CD8-positive, alpha-beta T cell (primary cell): ENCODE measurements at regions of chr2 and their contacts with region 1.

Region 1: GRCh38 chr2:62195421-62196277 is at the start of gene B3GNT2:
- DNase-seq: peak; percentile 79 to 92 (median 84)
- ATAC-seq: peak; percentile 75
- H3K4me3 ChIP-seq: peak within 1 kb of the TSS; percentile 93 to 99
- H3K4me3 Mint-ChIP-seq: peak within 1 kb of the TSS; percentile 91
- H3K27ac ChIP-seq: peak within 1 kb of the TSS; percentile 86 to 90
- H3K27ac Mint-ChIP-seq: peak within 1 kb of the TSS; percentile 91
- H3K4me1 ChIP-seq: peaks cover 40% of the 10 kb centered on the region
- H3K4me1 Mint-ChIP-seq: peaks cover 32% of the 10 kb centered on the region
- H3K27me3 ChIP-seq: no peaks in the 10 kb centered on the region
- H3K27me3 Mint-ChIP-seq: no peaks in the 10 kb centered on the region
- CTCF ChIP-seq: no peak
- total RNA-seq, gene B3GNT2: 74.1 to 77.9 TPM

Region 2: DNA sequence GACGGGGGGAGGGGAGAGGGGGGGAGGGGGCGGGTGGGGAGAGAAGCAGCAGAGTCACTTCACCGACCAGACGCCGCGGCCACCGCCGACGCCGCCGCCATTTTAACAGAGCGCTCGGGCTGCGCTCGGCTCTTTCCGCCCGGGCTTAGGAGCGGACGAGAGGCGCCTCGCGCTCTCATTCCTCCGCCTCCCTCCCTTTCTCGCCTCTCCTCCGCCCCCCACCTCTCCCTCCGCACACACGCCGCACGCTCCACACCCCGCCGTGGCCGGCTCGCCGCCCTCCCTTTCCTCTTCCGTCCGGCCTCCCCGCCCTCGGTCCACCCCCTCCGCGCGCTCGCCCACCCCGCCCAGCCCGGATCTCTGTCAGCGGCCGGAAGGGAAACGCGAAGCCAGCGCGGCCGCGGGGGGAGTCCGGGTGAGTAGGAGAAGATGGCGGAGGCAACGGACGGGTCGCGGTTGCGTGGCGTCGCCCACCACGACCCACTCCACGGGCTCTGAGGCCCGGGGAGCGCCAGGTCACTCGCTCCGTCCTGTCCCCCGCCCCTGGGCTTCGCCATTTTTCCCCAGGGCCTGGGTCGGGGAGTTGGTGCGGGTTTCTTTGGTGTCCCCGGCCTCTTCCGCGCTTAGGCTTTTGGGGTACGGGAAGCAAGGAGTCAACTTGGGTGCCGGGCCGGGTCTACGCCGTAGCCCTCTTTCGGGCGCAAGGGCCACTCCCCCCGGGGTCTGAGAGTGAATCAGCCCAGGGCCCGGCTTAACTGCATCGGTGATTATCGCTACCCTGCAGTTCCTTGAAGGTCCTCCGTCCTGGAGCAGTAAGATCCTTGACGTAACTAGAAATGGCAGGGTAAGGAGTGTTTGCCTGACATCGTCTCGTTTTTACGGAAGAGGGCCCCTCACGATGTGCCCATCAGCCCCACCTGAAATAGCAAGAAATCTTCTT is 724.4 kb before region 1 on chr2 and contains the start of gene USP34:
- CTCF ChIA-PET with region 1: no interaction called
- POLR2A ChIA-PET with region 1: no interaction called
- intact Hi-C with region 1: loop called (anchors 5 kb)
- DNase-seq: peak; percentile 90 to 98 (median 93)
- ATAC-seq: peak; percentile 85
- H3K4me3 ChIP-seq: peak within 1 kb of the TSS; percentile 77 to 99
- H3K4me3 Mint-ChIP-seq: peak within 1 kb of the TSS; percentile 92
- H3K27ac ChIP-seq: peak within 1 kb of the TSS; percentile 89 to 100
- H3K27ac Mint-ChIP-seq: peak within 1 kb of the TSS; percentile 98
- H3K4me1 ChIP-seq: peaks cover 35% of the 10 kb centered on the region
- H3K4me1 Mint-ChIP-seq: peaks cover 34% of the 10 kb centered on the region
- H3K27me3 ChIP-seq: no peaks in the 10 kb centered on the region
- H3K27me3 Mint-ChIP-seq: no peaks in the 10 kb centered on the region
- CTCF ChIP-seq: no peak
- total RNA-seq, gene USP34: 99.6 to 103 TPM

Region 3: GRCh38 chr2:61575447-61575859 is 620.2 kb before region 1 on chr2:
- CTCF ChIA-PET with region 1: no interaction called
- POLR2A ChIA-PET with region 1: no interaction called
- intact Hi-C with region 1: no loop called
- DNase-seq: peak in 1 of 9 experiments; percentile 10
- ATAC-seq: no peak
- H3K4me3 ChIP-seq: no peak overlapping the region
- H3K4me3 Mint-ChIP-seq: no peak overlapping the region
- H3K27ac ChIP-seq: no peak overlapping the region
- H3K27ac Mint-ChIP-seq: peak overlapping the region; percentile 20
- H3K4me1 ChIP-seq: peaks cover 6% of the 10 kb centered on the region
- H3K4me1 Mint-ChIP-seq: peaks cover 10% of the 10 kb centered on the region
- H3K27me3 ChIP-seq: no peaks in the 10 kb centered on the region
- H3K27me3 Mint-ChIP-seq: no peaks in the 10 kb centered on the region
- CTCF ChIP-seq: no peak

Region 4: DNA sequence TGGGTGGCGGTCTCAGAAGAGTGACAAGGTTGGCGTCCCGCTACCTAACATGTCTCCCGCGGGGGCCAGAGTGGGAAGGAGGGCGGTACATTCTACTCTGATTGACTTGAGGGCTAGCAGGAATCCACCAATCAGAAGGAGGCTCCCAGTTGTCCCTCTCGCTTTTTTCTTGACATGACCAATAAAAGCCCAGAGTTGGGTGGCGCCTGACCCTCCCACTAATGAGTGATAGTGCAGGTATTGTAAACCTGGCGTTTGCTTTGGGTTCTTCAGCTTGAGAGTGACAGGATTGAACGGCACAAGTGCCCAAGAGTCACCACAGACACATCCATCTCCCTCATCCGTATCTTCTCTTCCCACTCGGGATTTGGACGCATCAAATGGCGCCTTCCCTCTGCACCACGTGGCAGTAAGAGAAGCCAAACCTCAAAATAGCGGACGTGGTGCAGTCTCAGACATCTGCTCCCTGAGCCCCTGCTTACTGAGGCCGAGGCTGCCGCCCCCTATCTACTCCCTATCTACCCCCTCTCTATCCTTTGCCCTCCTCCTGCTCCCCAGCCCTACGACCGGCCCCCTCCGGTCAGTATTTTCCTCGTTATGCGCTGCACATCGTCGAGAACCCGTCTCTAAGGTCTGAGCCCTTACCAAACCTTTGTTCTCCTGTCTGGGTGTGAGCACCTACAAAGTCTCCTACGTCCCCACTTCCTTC is 341.0 kb before region 1 on chr2:
- CTCF ChIA-PET with region 1: no interaction called
- POLR2A ChIA-PET with region 1: no interaction called
- intact Hi-C with region 1: loop called in 1 of 2 experiments (anchors 1 kb)
- DNase-seq: peak; percentile 80 to 98 (median 87)
- ATAC-seq: peak; percentile 89
- H3K4me3 ChIP-seq: peak overlapping the region; percentile 79 to 88
- H3K4me3 Mint-ChIP-seq: peak overlapping the region; percentile 97
- H3K27ac ChIP-seq: peak overlapping the region; percentile 64 to 81
- H3K27ac Mint-ChIP-seq: peak overlapping the region; percentile 96
- H3K4me1 ChIP-seq: peaks cover 12% of the 10 kb centered on the region
- H3K4me1 Mint-ChIP-seq: peaks cover 15% of the 10 kb centered on the region
- H3K27me3 ChIP-seq: no peaks in the 10 kb centered on the region
- H3K27me3 Mint-ChIP-seq: no peaks in the 10 kb centered on the region
- CTCF ChIP-seq: no peak

Region 5: GRCh38 chr2:62216616-62217015 is 21.0 kb after region 1 on chr2:
- CTCF ChIA-PET with region 1: interaction called, 6 read pairs
- POLR2A ChIA-PET with region 1: interaction called, 4 read pairs
- intact Hi-C with region 1: loop called in 1 of 2 experiments (anchors 2 kb)
- DNase-seq: no peak
- ATAC-seq: no peak
- H3K4me3 ChIP-seq: no peak overlapping the region
- H3K4me3 Mint-ChIP-seq: peak overlapping the region; percentile 56
- H3K27ac ChIP-seq: peak overlapping the region in 1 of 2 experiments; percentile 81
- H3K27ac Mint-ChIP-seq: peak overlapping the region; percentile 90
- H3K4me1 ChIP-seq: peaks cover 96% of the 10 kb centered on the region
- H3K4me1 Mint-ChIP-seq: peaks cover 98% of the 10 kb centered on the region
- H3K27me3 ChIP-seq: no peaks in the 10 kb centered on the region
- H3K27me3 Mint-ChIP-seq: no peaks in the 10 kb centered on the region
- CTCF ChIP-seq: no peak

Region 6: DNA sequence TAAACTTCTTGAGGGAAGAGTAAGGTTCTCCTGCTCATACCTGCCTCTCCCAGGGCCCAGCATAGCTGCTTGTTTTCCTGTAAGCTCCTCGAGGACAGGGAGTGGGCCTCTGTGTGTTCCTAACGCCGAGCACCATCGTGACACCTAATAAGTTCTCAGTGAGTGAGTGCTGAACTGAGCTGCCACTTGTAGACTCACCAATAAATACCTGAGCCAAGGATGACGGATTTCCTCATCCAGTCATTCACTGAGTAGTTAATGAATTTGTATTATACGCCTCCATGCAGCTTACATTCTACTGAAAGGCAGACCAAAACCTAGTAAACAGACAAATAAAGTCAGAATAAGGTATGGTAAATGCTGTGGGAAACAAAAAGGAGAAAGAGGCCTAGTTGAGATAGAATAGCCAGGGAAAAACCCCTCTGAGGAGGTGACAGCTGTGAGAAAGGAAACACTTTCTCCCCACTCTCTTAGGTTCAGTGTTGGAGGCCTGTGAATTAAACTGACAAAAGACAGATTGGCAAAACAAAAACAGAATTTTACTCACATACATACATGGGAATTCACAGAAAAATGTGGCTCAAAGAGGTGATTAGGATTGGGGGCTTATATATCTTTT is 138.9 kb after region 1 on chr2:
- CTCF ChIA-PET with region 1: interaction called, 3 read pairs
- POLR2A ChIA-PET with region 1: no interaction called
- intact Hi-C with region 1: loop called in 1 of 2 experiments (anchors 1 kb)
- DNase-seq: peak in 1 of 9 experiments; percentile 28
- ATAC-seq: no peak
- H3K4me3 ChIP-seq: no peak overlapping the region
- H3K4me3 Mint-ChIP-seq: no peak overlapping the region
- H3K27ac ChIP-seq: no peak overlapping the region
- H3K27ac Mint-ChIP-seq: peak overlapping the region; percentile 45
- H3K4me1 ChIP-seq: no peaks in the 10 kb centered on the region
- H3K4me1 Mint-ChIP-seq: peaks cover 5% of the 10 kb centered on the region
- H3K27me3 ChIP-seq: no peaks in the 10 kb centered on the region
- H3K27me3 Mint-ChIP-seq: no peaks in the 10 kb centered on the region
- CTCF ChIP-seq: no peak

Region 7: GRCh38 chr2:63841254-63842022 is 1645.8 kb after region 1 on chr2 and contains the start of gene UGP2:
- CTCF ChIA-PET with region 1: no interaction called
- POLR2A ChIA-PET with region 1: no interaction called
- intact Hi-C with region 1: loop called (anchors 5 to 10 kb)
- DNase-seq: peak; percentile 68 to 92 (median 83)
- ATAC-seq: peak; percentile 68
- H3K4me3 ChIP-seq: peak within 1 kb of the TSS; percentile 94 to 98
- H3K4me3 Mint-ChIP-seq: peak within 1 kb of the TSS; percentile 99
- H3K27ac ChIP-seq: peak within 1 kb of the TSS; percentile 81 to 89
- H3K27ac Mint-ChIP-seq: peak within 1 kb of the TSS; percentile 98
- H3K4me1 ChIP-seq: peaks cover 41% of the 10 kb centered on the region
- H3K4me1 Mint-ChIP-seq: peaks cover 52% of the 10 kb centered on the region
- H3K27me3 ChIP-seq: no peaks in the 10 kb centered on the region
- H3K27me3 Mint-ChIP-seq: no peaks in the 10 kb centered on the region
- CTCF ChIP-seq: peak; percentile 24
- total RNA-seq, gene UGP2: 43.9 to 48.2 TPM